ENCODE measurements at regions of chr19 and their contacts with region 1.

Region 1: GRCh38 chr19:56765137-56765536 is 75.4 kb downstream of the PEG3 start:
- DNase-seq: no peak
- H3K4me3 ChIP-seq: peak overlapping the region; percentile 23
- CTCF ChIP-seq: no peak

Region 2: GRCh38 chr19:56718231-56718630 is 46.9 kb before region 1 on chr19:
- in situ Hi-C with region 1: loop called (anchors 5 kb)
- DNase-seq: no peak
- H3K4me3 ChIP-seq: no peak overlapping the region
- CTCF ChIP-seq: no peak

Measured in astrocyte of the cerebellum (primary cell).